ENCODE measurements at regions of chr6 and their contacts with region 1.

Region 1: GRCh38 chr6:2196079-2196679 is 49.2 kb downstream of the GMDS start:
- DNase-seq: no peak

Region 2: GRCh38 chr6:1686117-1687098 is 509.8 kb before region 1 on chr6:
- intact Hi-C with region 1: loop called in 1 of 2 experiments (anchors 10 kb)
- DNase-seq: no peak

Measured in posterior vena cava (tissue), 2 donors.